ENCODE measurements at regions of chr17 and their contacts with region 1.

Region 1: DNA sequence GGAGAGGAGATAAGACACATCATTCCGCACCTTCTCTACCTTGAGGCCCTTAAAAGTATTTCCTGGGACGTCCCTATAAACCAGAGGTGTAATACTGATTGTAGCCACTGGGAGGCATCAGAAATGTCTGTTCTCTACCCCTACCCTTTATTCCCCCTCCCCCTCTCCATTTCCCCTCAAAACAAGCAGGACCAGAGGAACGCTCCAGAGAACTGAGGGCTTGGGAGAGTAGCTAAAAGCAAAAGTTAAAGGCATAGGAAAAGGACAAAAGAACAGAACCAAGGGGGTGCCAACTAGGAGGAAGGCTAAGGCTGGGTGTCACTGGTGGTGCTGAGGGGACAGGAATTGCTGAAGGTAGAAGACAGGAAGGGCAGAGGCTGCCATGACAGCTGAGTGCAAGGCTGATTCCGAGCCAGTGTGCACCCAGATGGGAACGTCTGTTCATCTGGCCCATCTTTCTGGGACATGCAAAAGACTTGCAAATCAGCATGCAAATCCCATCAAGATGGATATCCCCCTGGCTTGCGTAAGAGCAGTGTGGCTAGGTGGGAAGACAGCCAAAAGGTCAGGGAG is 6.7 kb downstream of the CAMTA2 start:
- DNase-seq: no peak
- ATAC-seq: peak; percentile 71
- H3K4me3 ChIP-seq: no peak overlapping the region
- H3K27ac ChIP-seq: no peak overlapping the region
- H3K4me1 ChIP-seq: no peaks in the 10 kb centered on the region
- H3K27me3 ChIP-seq: no peaks in the 10 kb centered on the region

Region 2: GRCh38 chr17:5055543-5055942 is 74.8 kb after region 1 on chr17:
- intact Hi-C with region 1: loop called in 1 of 2 experiments (anchors 5 kb)
- DNase-seq: no peak
- ATAC-seq: no peak
- H3K4me3 ChIP-seq: no peak overlapping the region
- H3K27ac ChIP-seq: no peak overlapping the region
- H3K4me1 ChIP-seq: no peaks in the 10 kb centered on the region
- H3K27me3 ChIP-seq: no peaks in the 10 kb centered on the region

Region 3: GRCh38 chr17:5065227-5065744 is 84.6 kb after region 1 on chr17:
- intact Hi-C with region 1: loop called (anchors 2 to 5 kb)
- DNase-seq: no peak
- ATAC-seq: no peak
- H3K4me3 ChIP-seq: no peak overlapping the region
- H3K27ac ChIP-seq: no peak overlapping the region
- H3K4me1 ChIP-seq: no peaks in the 10 kb centered on the region
- H3K27me3 ChIP-seq: no peaks in the 10 kb centered on the region

Region 4: GRCh38 chr17:5099271-5099670 is 118.5 kb after region 1 on chr17:
- intact Hi-C with region 1: no loop called
- DNase-seq: no peak
- ATAC-seq: no peak
- H3K4me3 ChIP-seq: no peak overlapping the region
- H3K27ac ChIP-seq: no peak overlapping the region
- H3K4me1 ChIP-seq: no peaks in the 10 kb centered on the region
- H3K27me3 ChIP-seq: no peaks in the 10 kb centered on the region